ENCODE measurements at regions of chr7 and their contacts with region 1.

Region 1: GRCh38 chr7:74173866-74174605 is at the start of gene EIF4H:
- DNase-seq: peak; percentile 86 to 97 (median 95)
- ATAC-seq: peak; percentile 82 to 87
- H3K4me3 Mint-ChIP-seq: peak within 1 kb of the TSS; percentile 84 to 95 (median 90)
- H3K27ac Mint-ChIP-seq: peak within 1 kb of the TSS; percentile 85 to 97 (median 94)
- H3K4me1 Mint-ChIP-seq: peaks cover 15 to 52% (median 48%) of the 10 kb centered on the region in 4 donors
- H3K27me3 Mint-ChIP-seq: no peaks in the 10 kb centered on the region
- polyA plus RNA-seq, gene EIF4H: 219 to 239 (median 221) TPM

Region 2: GRCh38 chr7:74094224-74095101 is 79.6 kb before region 1 on chr7:
- POLR2A ChIA-PET with region 1: interaction called, 13 read pairs
- DNase-seq: peak; percentile 33 to 82 (median 54)
- ATAC-seq: peak; percentile 78 to 83
- H3K4me3 Mint-ChIP-seq: peak overlapping the region; percentile 77 to 93 (median 89)
- H3K27ac Mint-ChIP-seq: peak overlapping the region; percentile 79 to 97 (median 95)
- H3K4me1 Mint-ChIP-seq: peaks cover 10 to 32% (median 25%) of the 10 kb centered on the region in 4 donors
- H3K27me3 Mint-ChIP-seq: no peaks in the 10 kb centered on the region